Activated CD8-positive, alpha-beta memory T cell treated with anti-CD3 and anti-CD28 coated beads, Interleukin-2, amount 10 ng/mL, durations not matched to agents 7 days and 5 days (primary cell): ENCODE measurements at regions of chr7 and their contacts with region 1.

Region 1: GRCh38 chr7:23273141-23273599 is 26.0 kb upstream of the MALSU1 start:
- DNase-seq: peak; percentile 94
- ATAC-seq: peak; percentile 98
- H3K4me3 Mint-ChIP-seq: peak overlapping the region; percentile 65
- H3K27ac Mint-ChIP-seq: peak overlapping the region; percentile 64
- H3K4me1 Mint-ChIP-seq: peaks cover 16% of the 10 kb centered on the region
- H3K27me3 Mint-ChIP-seq: peaks cover 5% of the 10 kb centered on the region

Region 2: DNA sequence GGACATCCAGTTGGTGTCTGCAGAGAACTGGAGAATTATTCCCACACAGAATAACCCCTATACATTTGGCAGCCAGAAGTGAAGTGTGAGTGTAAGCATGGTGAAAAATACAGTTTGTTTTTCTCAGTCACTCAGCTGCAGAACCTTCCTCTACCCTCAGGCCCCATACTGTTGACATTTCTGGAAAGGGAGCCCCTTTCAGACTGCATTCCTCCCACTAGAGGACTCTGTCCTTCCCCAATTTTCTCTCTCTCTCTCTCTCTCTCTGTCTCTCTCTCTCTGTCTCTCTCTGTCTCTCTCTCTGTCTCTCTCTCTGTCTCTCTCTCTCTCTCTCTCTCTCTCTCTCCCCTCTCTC is 686.4 kb before region 1 on chr7:
- CTCF ChIA-PET with region 1: no interaction called
- DNase-seq: no peak
- ATAC-seq: no peak
- H3K4me3 Mint-ChIP-seq: no peak overlapping the region
- H3K27ac Mint-ChIP-seq: no peak overlapping the region
- H3K4me1 Mint-ChIP-seq: peaks cover 6% of the 10 kb centered on the region
- H3K27me3 Mint-ChIP-seq: peaks cover 71% of the 10 kb centered on the region

Region 3: DNA sequence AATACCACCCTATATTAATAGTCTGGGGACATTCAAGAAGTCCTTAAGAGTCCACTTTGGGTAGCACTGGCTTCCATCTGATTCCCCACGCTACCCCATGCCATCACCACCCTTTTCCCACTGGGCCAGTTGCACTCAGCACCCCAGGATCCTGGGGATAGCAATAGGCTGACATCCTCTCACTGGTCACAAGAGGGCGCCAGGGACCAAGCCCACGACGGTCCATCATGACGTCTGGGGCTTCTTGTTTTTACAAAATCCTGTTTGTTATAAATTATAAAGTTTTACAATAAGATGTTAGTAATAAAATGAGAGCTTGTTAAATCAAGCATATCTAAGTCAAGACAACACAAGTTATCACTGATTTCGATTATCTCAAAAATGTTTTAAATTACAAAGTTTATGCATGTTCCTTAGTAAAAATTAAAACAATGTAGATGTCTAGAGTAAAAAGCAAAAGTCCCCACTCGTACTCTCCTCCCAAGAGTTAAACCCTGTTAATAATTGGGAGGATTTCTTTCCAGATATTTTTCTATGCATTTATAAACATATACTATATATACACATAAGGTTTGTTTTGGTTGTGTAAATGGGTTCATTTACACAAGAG is 11.2 kb before region 1 on chr7:
- CTCF ChIA-PET with region 1: interaction called, 124 read pairs
- DNase-seq: peak; percentile 74
- ATAC-seq: peak; percentile 95
- H3K4me3 Mint-ChIP-seq: no peak overlapping the region
- H3K27ac Mint-ChIP-seq: no peak overlapping the region
- H3K4me1 Mint-ChIP-seq: peaks cover 6% of the 10 kb centered on the region
- H3K27me3 Mint-ChIP-seq: peaks cover 22% of the 10 kb centered on the region

Region 4: GRCh38 chr7:23315366-23315765 is 42.2 kb after region 1 on chr7:
- CTCF ChIA-PET with region 1: interaction called, 11 read pairs
- DNase-seq: no peak
- ATAC-seq: no peak
- H3K4me3 Mint-ChIP-seq: no peak overlapping the region
- H3K27ac Mint-ChIP-seq: no peak overlapping the region
- H3K4me1 Mint-ChIP-seq: no peaks in the 10 kb centered on the region
- H3K27me3 Mint-ChIP-seq: peaks cover 7% of the 10 kb centered on the region

Region 5: GRCh38 chr7:23357190-23358093 is 84.3 kb after region 1 on chr7:
- CTCF ChIA-PET with region 1: interaction called, 14 read pairs
- DNase-seq: no peak
- ATAC-seq: peak; percentile 53
- H3K4me3 Mint-ChIP-seq: no peak overlapping the region
- H3K27ac Mint-ChIP-seq: no peak overlapping the region
- H3K4me1 Mint-ChIP-seq: peaks cover 16% of the 10 kb centered on the region
- H3K27me3 Mint-ChIP-seq: peaks cover 53% of the 10 kb centered on the region

Region 6: GRCh38 chr7:23467806-23468516 is 194.8 kb after region 1 on chr7:
- CTCF ChIA-PET with region 1: interaction called, 29 read pairs
- DNase-seq: no peak
- ATAC-seq: no peak
- H3K4me3 Mint-ChIP-seq: peak overlapping the region; percentile 52
- H3K27ac Mint-ChIP-seq: peak overlapping the region; percentile 43
- H3K4me1 Mint-ChIP-seq: peaks cover 34% of the 10 kb centered on the region
- H3K27me3 Mint-ChIP-seq: peaks cover 79% of the 10 kb centered on the region

Region 7: GRCh38 chr7:23539494-23539907 is 266.3 kb after region 1 on chr7:
- CTCF ChIA-PET with region 1: interaction called, 70 read pairs
- DNase-seq: no peak
- ATAC-seq: peak; percentile 77
- H3K4me3 Mint-ChIP-seq: peak overlapping the region; percentile 44
- H3K27ac Mint-ChIP-seq: peak overlapping the region; percentile 84
- H3K4me1 Mint-ChIP-seq: peaks cover 18% of the 10 kb centered on the region
- H3K27me3 Mint-ChIP-seq: no peaks in the 10 kb centered on the region